Posterior cingulate gyrus (tissue), 11 donors: ENCODE measurements at regions of chr4 and their contacts with region 1.

Region 1: DNA sequence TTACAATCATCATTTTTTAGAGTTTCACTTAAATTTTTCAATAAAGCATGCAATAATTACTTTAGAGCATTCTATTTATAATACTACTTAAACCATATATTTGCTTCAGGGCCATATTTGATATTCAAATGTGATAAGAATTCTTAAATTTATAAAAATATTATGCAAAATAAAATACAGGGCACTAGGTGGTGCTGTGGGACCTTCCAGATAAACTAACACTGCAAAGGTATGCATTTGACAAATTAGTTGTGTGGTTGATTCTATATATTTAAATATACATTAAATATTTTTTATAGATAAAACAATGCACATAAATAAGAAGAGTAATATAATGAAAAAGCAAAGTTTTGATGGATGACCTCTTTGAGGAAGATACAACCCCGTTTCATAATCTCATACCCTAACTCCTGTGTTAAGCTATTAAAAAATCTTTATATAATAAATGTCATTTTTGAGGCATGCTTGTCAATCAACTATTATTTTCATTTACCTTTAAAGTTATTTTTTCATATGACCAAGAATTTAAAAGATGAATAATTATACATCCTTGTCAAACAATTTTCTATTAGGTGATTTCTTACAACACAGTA is 128.4 kb downstream of the REELD1 start:
- DNase-seq: peak in 2 of 10 donors; percentile 3 to 9

Region 2: DNA sequence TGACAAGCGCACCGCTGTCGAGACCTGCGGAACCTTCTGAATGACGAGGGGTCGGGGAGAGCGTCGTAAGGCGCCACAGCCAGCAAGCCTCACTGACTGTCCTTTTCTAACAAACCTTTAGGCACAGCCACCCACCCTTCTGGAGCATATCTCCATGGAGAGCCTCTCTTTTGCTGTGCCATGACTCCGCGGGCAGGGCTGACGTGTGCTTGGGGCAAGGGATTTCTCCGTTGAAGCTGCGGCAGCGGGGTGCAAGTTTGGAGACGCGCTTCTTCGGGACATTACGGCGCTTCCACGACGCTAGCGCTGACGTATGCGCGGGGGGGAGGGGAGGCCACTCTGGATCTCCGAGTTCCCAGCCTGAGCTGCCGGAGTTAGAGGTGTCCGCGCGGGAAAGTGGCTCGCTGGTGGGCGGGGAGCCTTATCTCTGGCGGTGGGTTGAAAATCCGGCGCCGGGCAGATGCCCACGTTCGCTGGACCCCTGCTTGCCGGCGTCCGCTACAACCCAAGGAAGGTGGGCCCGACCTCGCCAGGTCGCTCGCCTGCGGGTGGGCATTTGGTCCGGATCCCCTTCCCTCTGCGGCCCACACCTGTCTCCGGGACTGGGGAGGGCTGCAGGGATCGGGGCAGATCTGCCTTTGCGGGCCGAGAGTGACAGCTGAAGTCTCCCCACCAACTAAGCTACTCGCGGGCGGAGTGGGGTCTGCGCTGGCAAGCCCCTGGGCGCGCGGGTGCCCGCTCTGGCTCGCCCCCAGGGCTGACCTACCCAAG is 179.6 kb after region 1 on chr4:
- intact Hi-C with region 1: loop called (anchors 10 kb)
- DNase-seq: peak; percentile 90 to 99 (median 93)

Region 3: DNA sequence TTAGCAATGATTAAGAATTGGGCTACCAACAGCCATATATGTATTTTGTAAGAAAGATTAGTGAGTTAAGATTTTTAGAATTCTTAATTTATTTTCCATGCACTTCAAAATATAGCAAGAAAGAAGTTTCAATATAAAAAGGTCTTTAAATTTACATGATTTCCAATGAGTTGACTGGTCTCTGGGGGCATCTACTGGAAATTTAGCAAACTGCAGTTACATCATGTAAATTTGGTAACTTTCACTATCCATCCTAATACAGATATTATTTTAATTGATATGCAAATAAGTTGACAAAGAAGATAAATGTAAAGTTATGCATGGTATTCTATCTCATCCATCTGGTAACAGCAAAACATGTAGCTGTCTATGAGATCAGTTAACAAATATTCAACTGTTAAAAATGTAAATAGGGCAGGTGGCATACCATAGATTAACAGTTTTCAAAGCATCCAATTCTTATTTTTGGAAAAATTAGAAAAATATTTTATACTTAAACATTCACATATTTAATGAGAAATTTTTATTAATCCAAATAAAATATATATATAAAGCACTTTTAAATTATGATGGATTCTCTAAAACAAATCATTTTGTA is 573.9 kb after region 1 on chr4:
- intact Hi-C with region 1: loop called (anchors 2 kb)
- DNase-seq: no peak

Region 4: DNA sequence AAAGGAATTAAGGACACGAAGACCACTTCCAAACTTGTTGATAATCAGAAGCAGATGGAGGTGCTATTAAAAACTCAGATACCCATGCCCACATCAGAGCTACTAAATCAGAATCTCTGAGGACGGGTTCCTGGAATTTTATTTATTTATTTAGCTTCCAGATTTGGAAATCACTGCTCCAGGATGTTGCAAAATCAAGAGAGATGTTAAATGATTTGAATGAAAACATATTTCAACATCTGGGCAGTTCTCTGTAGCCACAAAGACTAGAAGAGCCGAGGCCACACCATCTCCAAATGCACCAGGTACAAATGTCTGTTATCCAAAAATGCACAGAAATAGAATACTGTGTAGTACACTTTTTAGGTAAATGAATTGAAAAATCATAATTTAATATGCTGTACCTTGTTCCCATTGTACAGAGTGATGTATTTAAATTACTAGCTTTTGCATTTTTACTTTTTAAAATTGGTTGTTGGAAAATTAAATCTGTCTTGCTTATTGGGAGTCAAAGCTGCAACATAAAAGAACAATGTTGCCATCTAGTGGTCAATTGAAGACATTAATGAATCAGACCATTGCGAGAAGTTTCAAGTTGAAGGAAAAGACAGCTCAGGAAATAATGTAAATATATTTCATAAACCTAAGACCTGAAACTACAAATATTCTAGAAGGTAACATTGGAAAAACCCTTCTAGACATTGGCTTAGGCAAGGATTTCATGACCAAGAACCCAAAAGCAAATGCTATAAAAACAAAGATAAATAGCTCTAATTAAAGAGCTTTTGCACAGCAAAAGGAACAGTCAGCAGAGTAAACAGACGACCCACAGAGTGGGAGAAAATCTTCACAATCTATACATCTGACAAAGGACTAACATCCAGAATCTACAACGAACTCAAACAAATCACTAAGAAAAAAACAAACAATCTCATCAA is 754.2 kb after region 1 on chr4:
- intact Hi-C with region 1: loop called (anchors 5 kb)
- DNase-seq: no peak